ENCODE measurements at regions of chr1 and their contacts with region 1.

Region 1: GRCh38 chr1:186363891-186364290 is 11.2 kb downstream of the TPR start:
- DNase-seq: peak in 1 of 2 experiments; percentile 22
- H3K4me3 ChIP-seq: no peak overlapping the region
- H3K4me1 ChIP-seq: peaks cover 6% of the 10 kb centered on the region; the same call in 1 of the 2 replicates
- H3K27me3 ChIP-seq: no peaks in the 10 kb centered on the region

Region 2: DNA sequence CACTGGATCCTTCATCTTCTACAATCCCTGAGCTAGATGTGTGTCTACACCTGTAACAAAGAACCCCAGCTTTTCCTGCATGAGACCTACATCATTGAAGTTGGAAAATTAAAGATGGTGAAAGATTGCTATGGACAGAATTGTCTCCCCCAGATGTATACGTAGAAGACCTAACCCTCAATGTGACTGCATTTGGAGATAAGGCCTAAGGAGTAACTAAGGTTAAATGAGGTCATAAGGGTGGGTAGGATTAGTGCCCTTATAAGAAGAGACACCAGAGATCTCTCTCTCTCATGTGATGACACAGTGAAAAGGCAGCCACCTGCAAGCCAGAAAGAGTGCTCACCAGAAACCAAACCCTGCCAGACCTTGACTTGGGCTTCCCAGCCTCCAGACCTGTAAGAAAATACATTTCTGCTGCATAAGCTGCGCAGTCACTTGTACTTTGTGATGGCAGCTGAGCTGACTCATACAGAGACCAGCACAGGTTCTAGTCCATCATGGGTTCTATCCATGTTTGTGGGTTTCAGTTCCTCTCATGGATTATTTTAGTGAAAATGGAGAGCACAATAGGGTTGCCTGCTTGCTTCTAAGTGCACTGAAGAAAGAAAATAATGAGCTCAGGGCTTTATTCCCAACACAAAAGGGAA is 169.7 kb before region 1 on chr1:
- in situ Hi-C with region 1: no loop called
- DNase-seq: no peak
- H3K4me3 ChIP-seq: no peak overlapping the region
- H3K4me1 ChIP-seq: no peaks in the 10 kb centered on the region
- H3K27me3 ChIP-seq: peaks cover 3% of the 10 kb centered on the region; the same call in 1 of the 2 replicates

Region 3: GRCh38 chr1:186315570-186315969 is 48.3 kb before region 1 on chr1:
- in situ Hi-C with region 1: loop called (anchors 5 kb)
- DNase-seq: no peak
- H3K4me3 ChIP-seq: no peak overlapping the region
- H3K4me1 ChIP-seq: no peaks in the 10 kb centered on the region
- H3K27me3 ChIP-seq: no peaks in the 10 kb centered on the region